ENCODE measurements at regions of chr12 and their contacts with region 1.

Region 1: DNA sequence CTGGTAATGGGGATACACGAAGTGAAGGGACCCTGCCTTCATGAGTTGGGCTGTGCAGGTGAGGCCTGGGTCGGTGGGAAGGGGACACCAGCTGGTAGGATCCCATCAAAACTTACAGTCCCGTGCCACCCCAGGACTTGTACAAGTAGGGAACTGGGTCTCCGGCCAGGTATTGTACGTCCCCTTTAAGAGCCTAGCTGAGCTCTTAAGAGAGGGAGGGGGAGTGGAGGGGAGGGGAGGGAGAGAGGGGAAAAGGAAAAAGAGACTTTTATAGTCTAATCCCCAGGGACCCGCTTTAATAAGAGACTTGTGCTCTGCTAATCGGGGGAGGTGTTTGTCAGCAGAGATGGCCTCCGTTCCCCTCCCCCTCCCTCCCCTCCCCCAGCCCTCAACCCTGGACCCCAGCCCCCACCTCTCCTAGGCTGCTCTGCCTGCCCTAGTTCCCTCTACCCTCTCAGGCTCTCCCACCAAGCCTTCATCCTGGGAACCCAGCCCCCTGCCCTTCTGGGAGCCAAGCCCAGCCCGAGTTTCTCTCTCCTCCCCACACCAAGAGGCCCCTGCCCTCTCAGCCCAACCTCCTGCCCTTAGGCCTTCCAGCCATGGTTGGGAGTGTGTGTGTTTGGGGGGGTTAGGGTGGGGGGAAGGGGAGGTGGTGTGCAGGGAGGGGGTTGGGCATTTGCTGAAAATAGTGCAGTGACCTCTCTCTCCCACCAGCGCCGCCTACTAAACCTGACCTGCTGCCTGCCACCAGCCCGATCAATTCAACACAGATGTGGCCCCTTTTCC is 2.6 kb downstream of the GDF11 start:
- DNase-seq: no peak
- H3K4me3 ChIP-seq: no peak overlapping the region
- H3K27ac ChIP-seq: peak overlapping the region in 1 of 2 donors; percentile 28
- H3K4me1 ChIP-seq: peaks cover 0 to 34% (median 26%) of the 10 kb centered on the region in 4 donors
- H3K27me3 ChIP-seq: no peaks in the 10 kb centered on the region
- CTCF ChIP-seq: no peak

Region 2: GRCh38 chr12:54549774-54550451 is 1195.6 kb before region 1 on chr12:
- intact Hi-C with region 1: no loop called
- DNase-seq: no peak
- H3K4me3 ChIP-seq: peak overlapping the region; percentile 47 to 64
- H3K27ac ChIP-seq: peak overlapping the region; percentile 47 to 70
- H3K4me1 ChIP-seq: peaks cover 0 to 19% (median 17%) of the 10 kb centered on the region in 4 donors
- H3K27me3 ChIP-seq: no peaks in the 10 kb centered on the region
- CTCF ChIP-seq: no peak

Region 3: GRCh38 chr12:55806982-55807381 is 61.4 kb after region 1 on chr12:
- intact Hi-C with region 1: loop called (anchors 5 kb)
- DNase-seq: no peak
- H3K4me3 ChIP-seq: no peak overlapping the region
- H3K27ac ChIP-seq: no peak overlapping the region
- H3K4me1 ChIP-seq: peaks cover 0 to 1% (median 0%) of the 10 kb centered on the region in 4 donors
- H3K27me3 ChIP-seq: no peaks in the 10 kb centered on the region
- CTCF ChIP-seq: no peak

Measured in tibial artery (tissue), 4 donors.